ENCODE measurements at regions of chr1 and their contacts with region 1.

Region 1: DNA sequence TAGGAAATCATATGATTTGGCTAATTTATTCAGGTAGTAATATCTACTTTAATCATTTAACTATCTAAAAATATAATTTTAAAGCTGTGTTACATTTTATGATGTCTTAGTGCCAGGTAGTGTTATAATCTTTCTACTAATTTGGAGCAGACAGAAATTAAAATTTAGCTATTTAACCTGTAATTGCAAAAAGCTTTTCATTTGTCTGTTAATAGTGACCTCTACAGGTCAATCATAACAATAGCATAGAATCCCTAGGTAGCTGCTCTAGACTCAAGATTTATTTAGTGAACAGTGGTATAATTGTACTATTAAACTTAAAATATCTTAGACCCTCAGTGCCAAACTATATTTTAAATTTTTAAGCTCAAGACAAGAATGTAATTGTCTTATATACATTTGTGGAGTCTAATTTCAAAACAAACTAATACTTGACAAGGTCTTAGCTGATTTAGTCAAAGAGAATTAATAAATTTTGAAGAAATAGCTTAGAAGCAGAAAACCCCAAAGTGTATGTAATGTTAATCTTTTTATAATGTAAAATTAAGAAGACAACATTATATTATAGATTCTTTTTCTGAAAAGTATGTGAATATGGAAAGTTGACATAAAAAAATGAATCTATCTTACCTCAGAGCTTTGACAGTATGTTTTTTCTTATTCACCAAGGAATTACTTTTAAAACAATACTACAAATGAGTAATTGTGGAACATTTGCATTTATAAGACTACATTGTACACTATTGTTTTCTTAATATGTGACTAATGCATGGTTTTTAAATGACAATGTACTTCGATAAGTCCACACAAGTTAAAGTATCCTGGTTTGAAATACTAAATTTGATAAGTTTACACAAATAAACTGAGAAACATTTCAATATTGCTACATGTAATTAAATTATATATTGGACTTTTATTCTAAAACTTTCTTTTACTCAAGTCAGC is 64.1 kb upstream of the RNPC3 start:
- DNase-seq: peak; percentile 29
- H3K4me3 ChIP-seq: no peak overlapping the region
- H3K27ac ChIP-seq: peak overlapping the region; percentile 4
- H3K4me1 ChIP-seq: peaks cover 10% of the 10 kb centered on the region
- H3K27me3 ChIP-seq: no peaks in the 10 kb centered on the region
- CTCF ChIP-seq: peak; percentile 52 to 58

Region 2: GRCh38 chr1:102566182-102566581 is 895.3 kb before region 1 on chr1:
- CTCF ChIA-PET with region 1: no interaction called
- dilution Hi-C with region 1: no loop called
- in situ Hi-C with region 1: no loop called
- intact Hi-C with region 1: loop called (anchors 10 kb)
- DNase-seq: no peak
- H3K4me3 ChIP-seq: no peak overlapping the region
- H3K27ac ChIP-seq: no peak overlapping the region
- H3K4me1 ChIP-seq: no peaks in the 10 kb centered on the region
- H3K27me3 ChIP-seq: no peaks in the 10 kb centered on the region
- CTCF ChIP-seq: peak in 1 of 2 donors; percentile 5

Region 3: GRCh38 chr1:102977293-102977692 is 484.1 kb before region 1 on chr1:
- CTCF ChIA-PET with region 1: no interaction called
- dilution Hi-C with region 1: no loop called
- in situ Hi-C with region 1: no loop called
- intact Hi-C with region 1: loop called (anchors 10 kb)
- DNase-seq: no peak
- H3K4me3 ChIP-seq: no peak overlapping the region
- H3K27ac ChIP-seq: no peak overlapping the region
- H3K4me1 ChIP-seq: no peaks in the 10 kb centered on the region
- H3K27me3 ChIP-seq: no peaks in the 10 kb centered on the region
- CTCF ChIP-seq: no peak

Region 4: DNA sequence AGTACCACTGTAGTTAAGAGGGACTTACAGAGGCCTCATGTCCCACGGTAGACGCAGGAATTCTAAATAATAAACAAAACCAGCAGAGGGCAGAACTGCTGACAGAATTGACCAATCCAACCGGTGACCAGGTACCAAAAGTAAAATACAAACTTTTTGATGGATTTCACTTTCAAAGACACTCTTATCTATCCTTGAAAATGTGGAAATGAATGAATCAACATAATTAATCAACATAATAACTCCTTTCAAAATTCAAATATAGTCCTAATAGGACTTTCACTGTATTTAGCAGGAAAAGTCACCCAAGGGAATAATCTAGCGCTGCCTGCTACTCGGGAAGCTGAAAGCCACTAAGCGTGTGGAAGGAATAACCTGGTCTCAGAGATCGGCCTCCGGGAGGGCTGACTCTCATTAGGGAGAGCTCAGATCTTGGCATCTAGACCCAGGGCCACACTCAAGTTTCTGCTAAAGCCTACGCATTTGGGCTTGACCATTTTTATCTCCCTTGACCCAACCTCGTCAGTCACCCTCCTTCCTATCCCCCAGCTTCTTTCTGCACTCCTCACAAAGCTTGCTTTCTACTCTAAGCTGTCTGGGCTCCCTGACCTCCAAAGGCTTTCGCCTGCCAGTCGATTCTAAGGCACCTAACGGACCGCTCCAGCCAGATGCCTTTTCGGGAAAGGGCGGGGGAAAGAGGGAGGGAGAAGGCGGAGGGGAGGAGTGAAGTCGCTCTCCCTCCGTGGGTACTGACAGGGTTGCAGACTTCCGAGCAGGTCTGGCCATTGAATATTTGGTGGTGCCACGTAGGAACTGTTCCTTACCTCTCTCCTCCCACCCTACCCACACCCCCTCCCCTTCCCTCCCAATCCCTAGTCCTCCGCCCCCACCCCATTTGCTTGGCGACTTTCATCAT is 354.7 kb before region 1 on chr1:
- CTCF ChIA-PET with region 1: interaction called, 5 read pairs
- dilution Hi-C with region 1: no loop called
- in situ Hi-C with region 1: no loop called
- intact Hi-C with region 1: loop called (anchors 2 kb)
- DNase-seq: peak; percentile 36
- H3K4me3 ChIP-seq: peak overlapping the region; percentile 29 to 53 (median 53)
- H3K27ac ChIP-seq: no peak overlapping the region
- H3K4me1 ChIP-seq: peaks cover 7% of the 10 kb centered on the region
- H3K27me3 ChIP-seq: no peaks in the 10 kb centered on the region
- CTCF ChIP-seq: peak; percentile 49 to 54

Region 5: GRCh38 chr1:103162360-103162759 is 299.1 kb before region 1 on chr1:
- CTCF ChIA-PET with region 1: no interaction called
- dilution Hi-C with region 1: no loop called
- in situ Hi-C with region 1: no loop called
- intact Hi-C with region 1: no loop called
- DNase-seq: peak; percentile 8
- H3K4me3 ChIP-seq: no peak overlapping the region
- H3K27ac ChIP-seq: no peak overlapping the region
- H3K4me1 ChIP-seq: no peaks in the 10 kb centered on the region
- H3K27me3 ChIP-seq: peaks cover 2% of the 10 kb centered on the region
- CTCF ChIP-seq: no peak

Region 6: DNA sequence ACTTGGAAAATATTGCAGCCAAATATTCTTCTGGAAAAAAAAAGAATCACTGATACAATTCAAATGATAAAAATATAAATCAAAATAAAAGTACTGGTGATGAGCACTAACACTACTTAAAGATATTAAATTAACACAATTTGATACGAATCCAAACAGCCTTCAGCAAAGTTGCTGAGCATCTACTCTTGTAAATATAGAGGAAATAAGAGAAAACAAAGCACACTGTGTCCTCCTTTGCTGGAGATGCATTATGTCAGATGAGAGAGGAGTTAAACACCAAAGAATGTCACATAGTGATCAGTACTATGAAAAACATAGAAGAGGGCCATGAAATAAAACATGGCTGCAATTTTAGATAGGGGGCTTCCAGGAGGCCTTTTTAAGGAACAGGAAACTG is 113.3 kb before region 1 on chr1:
- CTCF ChIA-PET with region 1: no interaction called
- dilution Hi-C with region 1: no loop called
- in situ Hi-C with region 1: no loop called
- intact Hi-C with region 1: no loop called
- DNase-seq: no peak
- H3K4me3 ChIP-seq: no peak overlapping the region
- H3K27ac ChIP-seq: no peak overlapping the region
- H3K4me1 ChIP-seq: no peaks in the 10 kb centered on the region
- H3K27me3 ChIP-seq: no peaks in the 10 kb centered on the region
- CTCF ChIP-seq: no peak

Region 7: DNA sequence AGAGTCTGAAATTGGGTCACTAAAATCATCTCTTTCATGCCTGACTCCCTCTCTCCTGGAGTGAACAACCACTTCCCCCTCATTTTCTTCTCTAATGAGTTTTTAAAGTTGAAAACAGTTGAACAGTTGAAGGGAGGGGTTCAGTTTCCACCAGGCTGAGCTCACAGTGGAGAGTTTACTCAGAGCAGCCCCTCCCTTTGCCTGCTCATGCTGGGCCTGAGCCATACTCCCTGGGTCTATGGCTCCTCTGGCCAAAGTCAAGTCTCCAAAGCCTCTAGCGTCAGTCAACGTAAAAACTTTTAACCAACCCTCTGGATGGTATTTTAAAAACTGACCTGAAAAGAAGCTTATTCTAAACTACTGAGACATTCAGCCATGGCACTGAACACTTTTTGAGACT is 36.8 kb before region 1 on chr1:
- CTCF ChIA-PET with region 1: no interaction called
- dilution Hi-C with region 1: loop called (anchors 5 kb)
- in situ Hi-C with region 1: no loop called
- intact Hi-C with region 1: no loop called
- DNase-seq: no peak
- H3K4me3 ChIP-seq: no peak overlapping the region
- H3K27ac ChIP-seq: no peak overlapping the region
- H3K4me1 ChIP-seq: no peaks in the 10 kb centered on the region
- H3K27me3 ChIP-seq: no peaks in the 10 kb centered on the region
- CTCF ChIP-seq: no peak

Region 8: DNA sequence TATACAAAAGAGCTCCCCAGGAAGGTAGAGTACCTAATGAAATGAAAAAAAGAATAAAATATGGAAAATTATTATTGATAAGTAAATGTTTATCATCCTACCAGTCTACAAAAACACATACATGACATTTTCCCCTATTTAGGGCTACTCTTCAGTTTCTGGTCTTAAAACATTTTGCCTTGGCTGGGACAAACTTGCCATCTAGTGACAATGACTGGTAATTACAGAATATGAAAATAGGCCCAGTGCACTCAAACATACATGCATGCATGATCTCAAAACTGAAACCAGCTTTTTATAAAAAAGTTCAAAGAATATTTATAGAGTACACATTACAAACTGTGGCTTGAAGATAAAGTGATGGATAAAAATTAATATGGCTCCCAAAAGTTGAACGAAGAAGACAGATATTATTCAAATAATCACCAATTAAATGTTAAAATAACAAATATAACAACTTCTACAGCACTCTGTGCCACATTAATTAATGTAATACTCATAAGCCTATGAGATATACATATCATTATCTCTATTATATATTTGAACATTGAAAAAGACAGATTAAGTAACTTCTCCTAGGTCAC is 53.6 kb after region 1 on chr1:
- CTCF ChIA-PET with region 1: no interaction called
- dilution Hi-C with region 1: no loop called
- in situ Hi-C with region 1: no loop called
- intact Hi-C with region 1: loop called (anchors 2 kb)
- DNase-seq: peak; percentile 37
- H3K4me3 ChIP-seq: no peak overlapping the region
- H3K27ac ChIP-seq: no peak overlapping the region
- H3K4me1 ChIP-seq: peaks cover 27% of the 10 kb centered on the region
- H3K27me3 ChIP-seq: no peaks in the 10 kb centered on the region
- CTCF ChIP-seq: peak; percentile 69 to 79